HepG2 (cell line): ENCODE measurements at regions of chr1 and their contacts with region 1.

Region 1: GRCh38 chr1:145858894-145859490 is at the start of gene PIAS3:
- DNase-seq: peak; percentile 76
- ATAC-seq: peak; percentile 92
- H3K4me3 ChIP-seq: peak within 1 kb of the TSS; percentile 82 to 92 (median 87)
- H3K27ac ChIP-seq: peak within 1 kb of the TSS; percentile 51
- H3K4me1 ChIP-seq: peaks cover 21% of the 10 kb centered on the region
- H3K27me3 ChIP-seq: 0 out of 5 replicates have a peak, but pooled peaks cover 0 to 3% of the 10 kb centered on the region in 2 experiments
- CTCF ChIP-seq: no peak
- EP300 ChIP-seq: no peak
- POLR2A ChIP-seq: peak in 1 of 2 experiments; percentile 50; a peak in 2 of 4 replicates
- RAD21 ChIP-seq: peak; percentile 17; the same call in 1 of the 2 replicates
- total RNA-seq, gene PIAS3: 3.7 and 4.6 TPM in 2 replicates

Region 2: DNA sequence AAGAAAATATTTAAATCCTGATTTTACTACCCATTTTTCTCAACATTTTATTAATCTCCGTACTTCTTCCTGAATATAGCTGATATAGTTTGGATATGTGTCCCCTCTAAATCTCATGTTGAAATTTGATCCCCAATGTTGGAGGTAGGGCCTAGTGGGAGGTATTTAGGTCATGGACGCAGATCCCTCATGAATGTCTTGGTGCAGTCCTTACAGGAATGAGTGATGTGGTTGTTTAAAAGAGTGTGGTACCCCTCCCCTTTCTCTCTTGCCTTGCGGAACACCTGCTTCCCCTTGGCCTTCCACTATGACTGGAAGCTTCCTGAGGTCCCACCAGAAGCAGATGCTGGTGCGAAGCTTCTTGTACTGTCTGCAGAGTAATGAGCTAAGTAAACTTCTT is 52.6 kb before region 1 on chr1:
- CTCF ChIA-PET with region 1: no interaction called
- POLR2A ChIA-PET with region 1: no interaction called
- in situ Hi-C with region 1: no loop called
- intact Hi-C with region 1: no loop called
- DNase-seq: no peak
- ATAC-seq: no peak
- H3K4me3 ChIP-seq: no peak overlapping the region
- H3K27ac ChIP-seq: no peak overlapping the region
- H3K4me1 ChIP-seq: no peaks in the 10 kb centered on the region
- H3K27me3 ChIP-seq: no peaks in the 10 kb centered on the region
- CTCF ChIP-seq: no peak
- EP300 ChIP-seq: no peak
- POLR2A ChIP-seq: no peak
- RAD21 ChIP-seq: no peak

Region 3: GRCh38 chr1:145823565-145824498 is 35.2 kb before region 1 on chr1 and contains the starts of genes POLR3C and RNF115:
- CTCF ChIA-PET with region 1: no interaction called
- POLR2A ChIA-PET with region 1: interaction called, 30 read pairs
- in situ Hi-C with region 1: no loop called
- intact Hi-C with region 1: no loop called
- DNase-seq: peak; percentile 84
- ATAC-seq: peak; percentile 96
- H3K4me3 ChIP-seq: peak within 1 kb of the TSS; percentile 58 to 88 (median 73)
- H3K27ac ChIP-seq: peak within 1 kb of the TSS; percentile 93
- H3K4me1 ChIP-seq: peaks cover 14% of the 10 kb centered on the region
- H3K27me3 ChIP-seq: no peaks in the 10 kb centered on the region; a peak in 1 of 5 replicates
- CTCF ChIP-seq: 0 out of 2 replicates have a peak, but pooled peaks have one; percentile 10
- EP300 ChIP-seq: no peak
- POLR2A ChIP-seq: peak in 1 of 2 experiments; percentile 72; a peak in 3 of 4 replicates
- RAD21 ChIP-seq: peak; percentile 51; the same call in 1 of the 2 replicates
- total RNA-seq, gene POLR3C: 24.3 TPM in 2 replicates
- total RNA-seq, gene RNF115: 7.8 and 10.1 TPM in 2 replicates

Region 4: DNA sequence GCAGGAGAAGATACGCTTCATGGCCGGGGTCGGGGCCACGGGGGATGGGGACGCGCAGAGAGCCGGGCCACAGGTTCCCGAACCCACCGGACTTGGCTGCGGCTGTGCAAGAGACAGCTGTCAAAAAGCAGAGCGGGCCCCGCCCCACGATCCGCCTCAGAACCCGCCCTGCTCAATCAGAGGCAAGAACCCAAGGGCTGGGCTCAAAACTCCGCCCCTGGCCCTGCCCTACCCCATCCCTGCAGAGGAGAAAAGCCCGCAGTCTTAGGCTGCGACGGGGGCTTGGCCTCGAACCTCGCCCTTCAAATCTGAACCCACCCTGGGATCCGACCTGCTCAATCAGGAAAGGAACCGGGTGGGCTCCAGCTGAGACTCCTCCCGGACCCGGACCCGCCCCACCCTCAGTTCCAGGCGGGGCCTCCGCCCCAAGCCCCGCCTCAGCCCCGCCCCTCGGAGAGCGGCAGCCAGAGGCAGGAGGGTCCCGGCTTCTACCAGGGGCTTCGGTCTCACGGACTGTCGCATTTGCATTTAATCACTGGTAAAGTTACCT is 26.8 kb after region 1 on chr1 and contains the start of gene ANKRD35:
- CTCF ChIA-PET with region 1: no interaction called
- POLR2A ChIA-PET with region 1: interaction called, 14 read pairs
- in situ Hi-C with region 1: no loop called
- intact Hi-C with region 1: loop called (anchors 5 kb)
- DNase-seq: peak; percentile 63
- ATAC-seq: peak; percentile 99
- H3K4me3 ChIP-seq: peak within 1 kb of the TSS; percentile 63 to 80 (median 71)
- H3K27ac ChIP-seq: no peak within 1 kb of the TSS
- H3K4me1 ChIP-seq: peaks cover 43% of the 10 kb centered on the region
- H3K27me3 ChIP-seq: peaks cover 2 to 26% of the 10 kb centered on the region in 2 experiments
- CTCF ChIP-seq: no peak
- EP300 ChIP-seq: no peak
- POLR2A ChIP-seq: no peak
- RAD21 ChIP-seq: no peak
- total RNA-seq, gene ANKRD35: 0.02 TPM in 1 of 2 replicates, not detected in the other

Region 5: DNA sequence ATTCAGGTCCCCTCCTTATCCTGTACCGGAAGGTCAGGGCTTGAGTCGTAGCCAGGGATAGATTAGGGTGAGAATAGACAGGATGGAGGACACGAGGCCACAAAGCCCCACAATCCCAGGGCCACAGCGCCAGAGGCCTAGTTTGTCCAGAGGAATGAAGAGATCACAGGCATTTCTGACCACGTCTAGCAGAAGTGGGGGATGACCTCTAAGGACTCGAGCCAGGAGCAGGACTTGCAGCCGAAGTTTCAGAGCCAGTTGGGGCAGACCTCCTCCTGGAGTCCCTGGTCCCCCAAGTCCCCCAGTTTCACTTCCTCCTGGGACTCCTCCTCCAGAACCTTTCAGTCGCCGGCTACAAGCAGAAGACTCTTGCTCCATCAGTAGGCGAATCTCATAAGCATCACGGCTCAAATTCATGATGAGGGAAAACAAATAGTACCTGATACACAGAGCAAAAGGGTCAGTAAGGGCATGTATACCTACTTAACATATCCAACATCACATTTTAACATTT is 53.2 kb after region 1 on chr1:
- CTCF ChIA-PET with region 1: no interaction called
- POLR2A ChIA-PET with region 1: interaction called, 25 read pairs
- in situ Hi-C with region 1: no loop called
- intact Hi-C with region 1: loop called (anchors 5 kb)
- DNase-seq: no peak
- ATAC-seq: no peak
- H3K4me3 ChIP-seq: no peak overlapping the region
- H3K27ac ChIP-seq: no peak overlapping the region
- H3K4me1 ChIP-seq: peaks cover 29% of the 10 kb centered on the region
- H3K27me3 ChIP-seq: no peaks in the 10 kb centered on the region
- CTCF ChIP-seq: no peak
- EP300 ChIP-seq: no peak
- POLR2A ChIP-seq: no peak
- RAD21 ChIP-seq: no peak

Region 6: GRCh38 chr1:145963995-145964901 is 105.3 kb after region 1 on chr1 and contains the starts of genes ANKRD34A and POLR3GL:
- CTCF ChIA-PET with region 1: no interaction called
- POLR2A ChIA-PET with region 1: interaction called, 23 read pairs
- in situ Hi-C with region 1: no loop called
- intact Hi-C with region 1: loop called (anchors 5 kb)
- DNase-seq: peak; percentile 92
- ATAC-seq: peak; percentile 88
- H3K4me3 ChIP-seq: peak within 1 kb of the TSS; percentile 77 to 84 (median 82)
- H3K27ac ChIP-seq: peak within 1 kb of the TSS; percentile 70
- H3K4me1 ChIP-seq: peaks cover 45% of the 10 kb centered on the region
- H3K27me3 ChIP-seq: peaks cover 0 to 28% of the 10 kb centered on the region in 2 experiments; a peak in 3 of 5 replicates
- CTCF ChIP-seq: peak; percentile 22
- EP300 ChIP-seq: no peak
- POLR2A ChIP-seq: peak; percentile 57 to 85
- RAD21 ChIP-seq: 0 out of 2 replicates have a peak, but pooled peaks have one; percentile 29
- total RNA-seq, gene ANKRD34A: 0.07 and 0.14 TPM in 2 replicates
- total RNA-seq, gene POLR3GL: 12.4 and 15.3 TPM in 2 replicates